GM12878 (cell line): ENCODE measurements at regions of chr16 and their contacts with region 1.

Region 1: GRCh38 chr16:75379911-75380847 is 53.1 kb downstream of the CFDP1 start:
- DNase-seq: peak; percentile 60
- ATAC-seq: peak; percentile 97
- H3K4me3 ChIP-seq: no peak overlapping the region
- H3K27ac ChIP-seq: peak overlapping the region; percentile 69
- H3K4me1 ChIP-seq: peaks cover 38% of the 10 kb centered on the region
- H3K27me3 ChIP-seq: no peaks in the 10 kb centered on the region
- CTCF ChIP-seq: no peak
- EP300 ChIP-seq: peak; percentile 76 to 83
- POLR2A ChIP-seq: no peak
- RAD21 ChIP-seq: peak; percentile 4; the same call in 1 of the 2 replicates

Region 2: DNA sequence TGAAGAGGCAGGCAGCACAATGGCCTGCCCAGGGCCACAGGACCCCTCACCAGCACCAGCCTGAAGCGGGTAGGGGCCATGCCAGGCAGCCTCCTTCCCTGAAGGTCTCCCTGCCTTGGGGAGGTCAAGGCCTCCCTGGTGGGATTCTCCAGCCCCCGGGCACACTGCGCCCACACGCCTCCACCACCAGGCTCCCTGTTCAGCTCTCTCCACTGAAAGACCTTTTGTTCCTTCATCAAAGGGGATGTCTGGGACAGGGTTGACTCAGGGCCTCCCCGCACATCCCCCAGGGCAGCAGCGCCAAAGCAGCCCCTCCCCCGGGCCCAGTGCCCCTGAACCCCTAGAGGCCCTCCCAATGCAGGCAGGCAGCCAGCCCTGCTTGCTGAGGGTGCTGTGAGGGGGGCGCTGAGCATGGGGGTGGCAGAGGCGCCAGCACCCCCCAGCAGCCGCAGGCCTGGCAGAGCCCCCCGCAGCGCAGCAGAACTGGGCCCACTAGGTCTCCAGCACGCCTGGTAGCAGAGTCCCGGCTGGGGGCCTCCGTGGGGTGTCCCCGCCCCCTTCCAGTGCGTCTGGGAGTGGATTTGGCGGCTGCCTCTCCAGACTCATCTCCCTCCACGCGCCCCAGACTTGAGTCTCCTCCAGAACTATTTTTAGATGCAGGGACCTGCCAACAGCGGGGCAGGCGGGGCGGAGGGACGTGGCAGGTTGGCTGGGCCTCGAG is 141.9 kb before region 1 on chr16:
- CTCF ChIA-PET with region 1: interaction called, 243 read pairs
- POLR2A ChIA-PET with region 1: interaction called, 4 read pairs
- RAD21 ChIA-PET with region 1: interaction called, 150 read pairs
- SMC1A ChIA-PET with region 1: interaction called, 42 read pairs
- in situ Hi-C with region 1: loop called (anchors 5 kb)
- intact Hi-C with region 1: loop called (anchors 1 kb)
- DNase-seq: no peak
- ATAC-seq: no peak
- H3K4me3 ChIP-seq: no peak overlapping the region
- H3K27ac ChIP-seq: no peak overlapping the region
- H3K4me1 ChIP-seq: no peaks in the 10 kb centered on the region
- H3K27me3 ChIP-seq: no peaks in the 10 kb centered on the region
- CTCF ChIP-seq: no peak
- EP300 ChIP-seq: no peak
- POLR2A ChIP-seq: no peak
- RAD21 ChIP-seq: no peak

Region 3: GRCh38 chr16:75244844-75245758 is 135.1 kb before region 1 on chr16:
- CTCF ChIA-PET with region 1: interaction called, 6 read pairs
- POLR2A ChIA-PET with region 1: interaction called, 13 read pairs
- RAD21 ChIA-PET with region 1: interaction called, 13 read pairs
- SMC1A ChIA-PET with region 1: interaction called, 9 read pairs
- in situ Hi-C with region 1: no loop called
- intact Hi-C with region 1: no loop called
- DNase-seq: no peak
- ATAC-seq: peak; percentile 81
- H3K4me3 ChIP-seq: no peak overlapping the region
- H3K27ac ChIP-seq: peak overlapping the region; percentile 51; the same call in 1 of the 2 replicates
- H3K4me1 ChIP-seq: peaks cover 19% of the 10 kb centered on the region
- H3K27me3 ChIP-seq: no peaks in the 10 kb centered on the region
- CTCF ChIP-seq: no peak
- EP300 ChIP-seq: no peak
- POLR2A ChIP-seq: no peak
- RAD21 ChIP-seq: no peak

Region 4: GRCh38 chr16:75305364-75306098 is 74.6 kb before region 1 on chr16:
- CTCF ChIA-PET with region 1: interaction called, 8 read pairs
- POLR2A ChIA-PET with region 1: interaction called, 6 read pairs
- RAD21 ChIA-PET with region 1: interaction called, 18 read pairs
- SMC1A ChIA-PET with region 1: interaction called, 27 read pairs
- in situ Hi-C with region 1: no loop called
- intact Hi-C with region 1: no loop called
- DNase-seq: peak; percentile 71
- ATAC-seq: peak; percentile 95
- H3K4me3 ChIP-seq: no peak overlapping the region
- H3K27ac ChIP-seq: peak overlapping the region; percentile 55
- H3K4me1 ChIP-seq: peaks cover 12% of the 10 kb centered on the region
- H3K27me3 ChIP-seq: no peaks in the 10 kb centered on the region
- CTCF ChIP-seq: no peak
- EP300 ChIP-seq: peak in 1 of 2 experiments; percentile 13; a peak in 1 of 4 replicates
- POLR2A ChIP-seq: no peak
- RAD21 ChIP-seq: no peak

Region 5: DNA sequence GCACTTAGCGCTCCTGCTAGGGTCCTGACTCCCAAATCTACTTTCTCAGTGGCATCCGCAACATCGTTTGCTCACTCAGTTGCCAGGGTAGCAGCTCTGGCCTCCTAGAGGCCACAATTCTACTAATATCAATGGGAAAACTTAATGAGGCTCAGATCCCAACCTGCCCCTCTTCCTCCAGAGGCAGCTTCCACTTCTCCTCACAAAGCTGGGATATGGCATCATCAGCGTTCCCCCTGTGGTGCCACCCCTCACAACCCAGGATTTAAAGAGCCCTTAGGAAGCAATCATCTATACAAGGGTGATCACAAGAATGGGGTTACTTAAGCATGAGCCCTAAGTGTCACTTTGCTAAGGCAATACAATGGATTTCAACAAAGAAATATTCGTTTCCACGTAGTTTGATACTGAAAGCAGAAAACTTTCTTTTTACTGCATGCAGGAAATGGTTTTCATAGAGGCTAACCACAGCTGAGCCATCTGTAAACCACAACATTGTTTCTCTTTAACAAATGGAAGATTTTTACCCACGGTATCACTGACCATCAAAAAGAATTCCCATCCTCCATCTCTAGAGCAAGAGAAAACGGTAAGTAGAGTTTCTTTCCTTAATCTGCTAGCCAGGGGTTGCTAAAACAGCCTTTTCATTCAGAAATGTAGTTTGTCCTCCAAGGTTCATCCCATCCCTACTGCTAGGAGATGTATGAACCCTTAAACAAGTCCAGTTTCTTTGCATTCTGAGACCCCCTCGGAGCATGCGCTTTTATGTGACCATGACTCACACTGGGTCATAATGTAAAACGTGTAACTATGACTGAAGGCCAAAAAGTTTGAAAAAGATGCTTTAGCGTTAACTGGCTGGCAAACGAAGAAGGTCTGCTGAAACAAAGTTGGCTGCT is 60.4 kb before region 1 on chr16:
- CTCF ChIA-PET with region 1: interaction called, 39 read pairs
- POLR2A ChIA-PET with region 1: interaction called, 9 read pairs
- RAD21 ChIA-PET with region 1: interaction called, 41 read pairs
- SMC1A ChIA-PET with region 1: interaction called, 91 read pairs
- in situ Hi-C with region 1: no loop called
- intact Hi-C with region 1: loop called (anchors 1 kb)
- DNase-seq: peak; percentile 78
- ATAC-seq: peak; percentile 76
- H3K4me3 ChIP-seq: peak overlapping the region; percentile 4; the same call in 1 of the 2 replicates
- H3K27ac ChIP-seq: peak overlapping the region; percentile 79
- H3K4me1 ChIP-seq: peaks cover 34% of the 10 kb centered on the region
- H3K27me3 ChIP-seq: no peaks in the 10 kb centered on the region
- CTCF ChIP-seq: no peak
- EP300 ChIP-seq: peak; percentile 67 to 86; a peak in 3 of 4 replicates
- POLR2A ChIP-seq: no peak
- RAD21 ChIP-seq: 0 out of 2 replicates have a peak, but pooled peaks have one; percentile 14

Region 6: GRCh38 chr16:75361936-75362335 is 18.2 kb before region 1 on chr16:
- CTCF ChIA-PET with region 1: interaction called, 7 read pairs
- POLR2A ChIA-PET with region 1: interaction called, 5 read pairs
- RAD21 ChIA-PET with region 1: interaction called, 15 read pairs
- SMC1A ChIA-PET with region 1: interaction called, 15 read pairs
- in situ Hi-C with region 1: no loop called
- intact Hi-C with region 1: no loop called
- DNase-seq: no peak
- ATAC-seq: no peak
- H3K4me3 ChIP-seq: no peak overlapping the region
- H3K27ac ChIP-seq: no peak overlapping the region
- H3K4me1 ChIP-seq: no peaks in the 10 kb centered on the region
- H3K27me3 ChIP-seq: no peaks in the 10 kb centered on the region
- CTCF ChIP-seq: no peak
- EP300 ChIP-seq: no peak
- POLR2A ChIP-seq: no peak
- RAD21 ChIP-seq: no peak

Region 7: GRCh38 chr16:75550211-75550662 is 170.1 kb after region 1 on chr16:
- CTCF ChIA-PET with region 1: no interaction called
- POLR2A ChIA-PET with region 1: no interaction called
- RAD21 ChIA-PET with region 1: no interaction called
- SMC1A ChIA-PET with region 1: no interaction called
- in situ Hi-C with region 1: no loop called
- intact Hi-C with region 1: no loop called
- DNase-seq: peak; percentile 69
- ATAC-seq: peak; percentile 89
- H3K4me3 ChIP-seq: no peak overlapping the region
- H3K27ac ChIP-seq: no peak overlapping the region
- H3K4me1 ChIP-seq: peaks cover 8% of the 10 kb centered on the region
- H3K27me3 ChIP-seq: no peaks in the 10 kb centered on the region
- CTCF ChIP-seq: peak; percentile 70 to 78 (median 77)
- EP300 ChIP-seq: no peak
- POLR2A ChIP-seq: no peak
- RAD21 ChIP-seq: peak; percentile 85